ENCODE measurements at regions of chr1 and their contacts with region 1.

Region 1: GRCh38 chr1:215526553-215527151 is 40.5 kb upstream of the KCTD3 start:
- DNase-seq: no peak
- H3K4me3 Mint-ChIP-seq: no peak overlapping the region
- H3K27ac Mint-ChIP-seq: no peak overlapping the region
- H3K4me1 Mint-ChIP-seq: peaks cover 1% of the 10 kb centered on the region
- H3K27me3 Mint-ChIP-seq: peaks cover 7% of the 10 kb centered on the region

Region 2: DNA sequence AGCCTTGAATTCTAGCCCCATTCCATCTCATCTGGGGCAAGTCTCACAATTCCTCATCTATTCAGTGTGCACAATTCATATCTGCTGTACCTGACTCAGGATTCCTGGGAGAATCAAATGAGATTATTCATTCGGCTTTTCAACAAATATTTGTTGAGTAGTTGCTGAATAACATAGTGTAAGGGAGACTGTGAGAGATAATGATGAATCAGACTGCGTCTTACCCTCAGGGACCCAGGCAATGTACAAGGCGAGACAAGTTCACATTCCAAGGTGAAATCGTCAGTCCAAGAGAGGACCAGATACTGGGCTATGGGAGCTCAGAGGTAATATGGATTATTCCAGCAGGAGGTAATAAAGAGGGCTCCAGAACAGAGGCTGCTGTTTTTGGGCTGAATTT is 1313.5 kb before region 1 on chr1:
- CTCF ChIA-PET with region 1: no interaction called
- intact Hi-C with region 1: loop called (anchors 5 kb)
- DNase-seq: no peak
- H3K4me3 Mint-ChIP-seq: no peak overlapping the region
- H3K27ac Mint-ChIP-seq: no peak overlapping the region
- H3K4me1 Mint-ChIP-seq: peaks cover 3% of the 10 kb centered on the region
- H3K27me3 Mint-ChIP-seq: peaks cover 2% of the 10 kb centered on the region

Region 3: GRCh38 chr1:214632091-214632490 is 894.6 kb before region 1 on chr1:
- CTCF ChIA-PET with region 1: interaction called, 4 read pairs
- intact Hi-C with region 1: loop called (anchors 1 kb)
- DNase-seq: no peak
- H3K4me3 Mint-ChIP-seq: no peak overlapping the region
- H3K27ac Mint-ChIP-seq: no peak overlapping the region
- H3K4me1 Mint-ChIP-seq: peaks cover 22% of the 10 kb centered on the region
- H3K27me3 Mint-ChIP-seq: no peaks in the 10 kb centered on the region

Region 4: DNA sequence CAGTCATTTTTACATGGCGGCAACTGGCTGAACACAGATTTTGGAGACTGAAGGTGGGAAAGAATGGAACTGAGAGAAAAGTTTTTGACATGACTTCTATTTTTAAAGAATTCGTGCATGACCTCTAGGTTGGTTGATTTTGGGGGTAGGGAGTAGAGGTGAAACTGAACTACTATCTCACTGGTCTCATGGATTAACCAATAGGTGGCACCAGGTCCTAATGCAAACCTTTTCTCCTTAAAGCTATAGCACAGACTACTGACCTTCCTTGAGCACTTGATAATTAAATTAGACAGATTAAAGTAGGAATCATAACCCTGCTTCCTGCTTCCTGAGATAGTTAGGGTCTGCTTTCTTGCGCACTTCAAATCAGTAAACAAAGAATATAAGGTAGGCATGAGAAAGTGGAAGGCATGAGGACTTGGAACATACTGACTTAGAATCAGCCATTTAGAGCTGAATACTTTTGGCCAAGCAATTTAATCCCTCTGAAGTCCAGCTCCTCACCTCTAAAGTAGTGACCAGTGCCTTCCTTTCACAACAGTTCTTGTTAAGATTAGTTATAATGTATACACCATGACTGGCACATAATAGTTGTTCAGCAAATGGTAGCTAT is 717.7 kb before region 1 on chr1:
- CTCF ChIA-PET with region 1: no interaction called
- intact Hi-C with region 1: loop called (anchors 10 kb)
- DNase-seq: no peak
- H3K4me3 Mint-ChIP-seq: no peak overlapping the region
- H3K27ac Mint-ChIP-seq: no peak overlapping the region
- H3K4me1 Mint-ChIP-seq: no peaks in the 10 kb centered on the region
- H3K27me3 Mint-ChIP-seq: no peaks in the 10 kb centered on the region

Region 5: GRCh38 chr1:215606564-215607168 is 80.0 kb after region 1 on chr1:
- CTCF ChIA-PET with region 1: no interaction called
- intact Hi-C with region 1: loop called (anchors 1 kb)
- DNase-seq: no peak
- H3K4me3 Mint-ChIP-seq: no peak overlapping the region
- H3K27ac Mint-ChIP-seq: no peak overlapping the region
- H3K4me1 Mint-ChIP-seq: no peaks in the 10 kb centered on the region
- H3K27me3 Mint-ChIP-seq: no peaks in the 10 kb centered on the region

Measured in activated naive CD4-positive, alpha-beta T cell treated with anti-CD3 and anti-CD28 coated beads for 36 hours (primary cell).